WTC11 (cell line): ENCODE measurements at regions of chr22 and their contacts with region 1.

Region 1: GRCh38 chr22:39114112-39114511 is 17.1 kb downstream of the APOBEC3H start:
- DNase-seq: peak; percentile 51
- ATAC-seq: peak; percentile 84
- H3K4me3 Mint-ChIP-seq: peak overlapping the region; percentile 57
- H3K27ac Mint-ChIP-seq: peak overlapping the region; percentile 35
- H3K4me1 Mint-ChIP-seq: peaks cover 48% of the 10 kb centered on the region
- H3K27me3 Mint-ChIP-seq: peaks cover 53% of the 10 kb centered on the region
- CTCF ChIP-seq: no peak

Region 2: GRCh38 chr22:39097098-39098020 is 16.8 kb before region 1 on chr22 and contains the start of gene APOBEC3H:
- CTCF ChIA-PET with region 1: interaction called, 11 read pairs
- POLR2A ChIA-PET with region 1: no interaction called
- DNase-seq: no peak
- ATAC-seq: no peak
- H3K4me3 Mint-ChIP-seq: no peak within 1 kb of the TSS
- H3K27ac Mint-ChIP-seq: peak within 1 kb of the TSS; percentile 54
- H3K4me1 Mint-ChIP-seq: peaks cover 45% of the 10 kb centered on the region
- H3K27me3 Mint-ChIP-seq: no peaks in the 10 kb centered on the region
- CTCF ChIP-seq: no peak
- total RNA-seq, gene APOBEC3H: 0.42 to 0.80 TPM (median 0.66 TPM) in 3 replicates